ENCODE measurements at regions of chr1 and their contacts with region 1.

Region 1: GRCh38 chr1:56831871-56832693 is 12.9 kb upstream of the FYB2 start:
- DNase-seq: peak; percentile 87
- H3K4me3 ChIP-seq: no peak overlapping the region
- H3K27ac ChIP-seq: peak overlapping the region; percentile 53
- H3K4me1 ChIP-seq: peaks cover 9% of the 10 kb centered on the region
- H3K27me3 ChIP-seq: no peaks in the 10 kb centered on the region
- CTCF ChIP-seq: peak; percentile 86 to 93
- POLR2A ChIP-seq: no peak

Region 2: GRCh38 chr1:56821140-56821797 is 10.8 kb before region 1 on chr1:
- CTCF ChIA-PET with region 1: interaction called, 20 read pairs
- POLR2A ChIA-PET with region 1: no interaction called
- dilution Hi-C with region 1: no loop called
- intact Hi-C with region 1: no loop called
- DNase-seq: peak; percentile 62
- H3K4me3 ChIP-seq: no peak overlapping the region
- H3K27ac ChIP-seq: no peak overlapping the region
- H3K4me1 ChIP-seq: no peaks in the 10 kb centered on the region
- H3K27me3 ChIP-seq: no peaks in the 10 kb centered on the region
- CTCF ChIP-seq: peak; percentile 93 to 95
- POLR2A ChIP-seq: no peak

Region 3: DNA sequence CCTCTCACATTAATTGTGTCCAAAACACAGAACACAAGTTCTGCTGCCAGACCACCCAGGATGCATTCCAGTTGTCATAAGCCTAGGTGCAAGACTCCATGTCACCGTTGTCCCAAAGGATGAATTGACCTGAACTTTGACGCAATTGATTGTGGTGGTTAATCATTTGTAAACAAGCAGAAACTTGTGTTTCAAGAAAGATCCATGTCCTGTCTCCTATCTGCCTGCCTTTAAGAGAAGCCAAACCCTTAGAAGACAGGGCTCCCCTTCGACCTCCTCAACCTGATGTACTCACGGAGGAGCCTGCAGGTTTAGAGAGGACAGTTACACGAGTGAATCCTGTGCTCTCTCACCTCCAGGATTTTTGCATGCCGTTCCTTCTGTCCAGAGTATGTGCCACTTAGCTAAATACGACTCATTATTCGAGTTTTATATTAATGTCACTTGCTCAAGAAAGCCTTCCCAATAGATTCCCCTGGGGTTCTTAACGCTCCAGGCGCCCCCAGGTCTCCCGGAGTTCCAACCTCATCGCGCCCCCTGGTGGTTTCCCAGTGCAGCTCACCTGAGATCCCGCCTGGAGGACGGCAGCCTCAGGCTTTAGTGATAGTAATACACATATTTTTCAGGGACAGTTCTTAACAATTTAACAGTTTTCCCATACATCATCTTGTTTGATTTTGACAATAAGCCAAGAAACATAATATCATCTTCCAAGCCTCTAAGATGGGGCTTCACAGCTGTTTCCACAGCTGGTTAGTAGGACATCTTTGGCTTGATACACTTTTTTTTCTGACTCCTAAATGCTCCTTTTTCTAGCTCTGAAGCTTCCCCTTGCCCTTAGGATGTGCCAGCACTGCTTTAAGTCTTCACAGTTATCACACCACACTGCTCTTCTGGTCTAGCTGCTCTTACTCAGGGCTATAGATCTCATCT is 136.1 kb after region 1 on chr1:
- CTCF ChIA-PET with region 1: interaction called, 5 read pairs
- POLR2A ChIA-PET with region 1: no interaction called
- dilution Hi-C with region 1: no loop called
- intact Hi-C with region 1: loop called (anchors 1 kb)
- DNase-seq: peak; percentile 6
- H3K4me3 ChIP-seq: no peak overlapping the region
- H3K27ac ChIP-seq: no peak overlapping the region
- H3K4me1 ChIP-seq: no peaks in the 10 kb centered on the region
- H3K27me3 ChIP-seq: no peaks in the 10 kb centered on the region
- CTCF ChIP-seq: peak; percentile 37 to 56
- POLR2A ChIP-seq: no peak

Region 4: DNA sequence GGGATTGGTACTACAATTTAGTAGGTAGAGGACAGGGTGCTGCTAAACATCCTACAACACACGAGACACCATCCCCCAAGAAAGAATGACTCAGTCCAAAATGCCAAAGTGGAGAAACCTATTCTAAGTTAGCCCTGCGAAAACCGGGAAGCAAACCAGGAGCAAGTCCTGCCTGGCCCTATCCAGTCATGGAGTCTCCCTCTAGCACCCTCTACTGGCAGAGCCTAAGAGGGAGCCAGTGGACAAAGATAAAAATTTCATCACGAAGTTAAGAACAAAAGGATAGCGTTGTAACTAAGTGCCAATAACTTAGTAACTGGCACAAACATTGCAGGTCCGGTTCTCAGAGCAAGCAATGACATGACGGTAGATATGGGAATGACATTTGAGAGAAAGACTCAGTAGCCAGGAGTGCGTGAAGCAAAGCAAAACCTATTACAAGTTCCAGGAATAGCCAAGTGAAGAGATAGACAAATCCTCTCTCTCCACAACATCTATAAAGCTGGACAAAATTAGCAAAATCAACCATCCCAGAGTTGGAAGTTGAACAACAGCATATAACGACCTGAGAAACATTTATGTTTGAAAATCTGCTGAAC is 1331.0 kb after region 1 on chr1:
- CTCF ChIA-PET with region 1: interaction called, 17 read pairs
- POLR2A ChIA-PET with region 1: no interaction called
- dilution Hi-C with region 1: no loop called
- intact Hi-C with region 1: loop called (anchors 1 kb)
- DNase-seq: peak; percentile 56
- H3K4me3 ChIP-seq: no peak overlapping the region
- H3K27ac ChIP-seq: no peak overlapping the region
- H3K4me1 ChIP-seq: no peaks in the 10 kb centered on the region
- H3K27me3 ChIP-seq: no peaks in the 10 kb centered on the region
- CTCF ChIP-seq: peak; percentile 70 to 77
- POLR2A ChIP-seq: no peak

Region 5: DNA sequence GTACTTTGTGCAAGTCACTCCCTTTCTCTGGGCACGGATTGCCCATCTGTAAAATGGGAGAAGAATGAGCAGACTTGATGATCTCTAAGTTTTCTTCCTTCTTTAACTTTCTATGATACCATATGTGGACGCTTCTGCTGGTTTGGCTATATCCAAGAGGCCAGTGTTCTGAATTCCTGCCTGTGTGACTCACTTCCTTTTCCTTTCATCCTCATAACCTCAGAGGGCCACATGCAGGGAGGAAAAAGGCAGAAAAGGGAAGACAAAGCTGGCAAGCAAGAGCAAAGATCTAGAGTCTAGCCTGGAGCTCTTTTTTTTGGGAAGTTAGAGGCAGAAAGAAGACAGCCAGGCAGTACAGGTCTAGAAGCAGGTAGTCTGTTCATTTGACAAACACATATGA is 1563.3 kb after region 1 on chr1:
- CTCF ChIA-PET with region 1: no interaction called
- POLR2A ChIA-PET with region 1: no interaction called
- dilution Hi-C with region 1: no loop called
- intact Hi-C with region 1: loop called (anchors 1 kb)
- DNase-seq: peak; percentile 78
- H3K4me3 ChIP-seq: no peak overlapping the region
- H3K27ac ChIP-seq: peak overlapping the region; percentile 84
- H3K4me1 ChIP-seq: peaks cover 25% of the 10 kb centered on the region
- H3K27me3 ChIP-seq: no peaks in the 10 kb centered on the region
- CTCF ChIP-seq: no peak
- POLR2A ChIP-seq: no peak

Region 6: GRCh38 chr1:58515794-58516401 is 1683.8 kb after region 1 on chr1:
- CTCF ChIA-PET with region 1: interaction called, 5 read pairs
- POLR2A ChIA-PET with region 1: no interaction called
- dilution Hi-C with region 1: no loop called
- intact Hi-C with region 1: loop called (anchors 10 kb)
- DNase-seq: peak; percentile 71
- H3K4me3 ChIP-seq: no peak overlapping the region
- H3K27ac ChIP-seq: no peak overlapping the region
- H3K4me1 ChIP-seq: no peaks in the 10 kb centered on the region
- H3K27me3 ChIP-seq: no peaks in the 10 kb centered on the region
- CTCF ChIP-seq: peak; percentile 37 to 58
- POLR2A ChIP-seq: no peak